ENCODE measurements at regions of chr11 and their contacts with region 1.

Region 1: DNA sequence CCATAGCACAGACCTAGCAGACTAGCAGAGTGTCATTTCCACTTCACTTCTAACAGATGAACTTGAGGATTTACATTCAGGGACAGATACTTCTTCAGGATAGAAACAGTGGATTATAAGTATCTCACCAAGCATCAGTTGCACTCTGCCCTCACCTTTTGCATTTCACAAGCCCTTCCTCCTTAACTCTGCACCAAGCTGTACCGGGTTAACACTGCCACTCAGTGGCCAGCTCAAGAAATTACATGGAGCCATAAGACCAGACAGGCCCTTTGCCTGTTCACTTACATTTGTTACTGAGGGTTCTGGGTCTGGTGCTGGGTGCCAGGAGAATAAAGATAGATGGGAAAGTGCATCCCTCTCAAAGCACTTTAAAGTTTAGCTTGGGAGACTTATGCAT is 309.8 kb downstream of the SHANK2 start:
- DNase-seq: no peak
- ATAC-seq: no peak
- H3K4me3 ChIP-seq: no peak overlapping the region
- H3K27ac ChIP-seq: no peak overlapping the region
- H3K4me1 ChIP-seq: no peaks in the 10 kb centered on the region
- H3K27me3 ChIP-seq: no peaks in the 10 kb centered on the region
- CTCF ChIP-seq: no peak; the same call in 1 of the 2 replicates
- POLR2A ChIP-seq: no peak
- RAD21 ChIP-seq: no peak

Region 2: GRCh38 chr11:70897429-70897828 is 45.2 kb before region 1 on chr11:
- CTCF ChIA-PET with region 1: interaction called, 10 read pairs
- POLR2A ChIA-PET with region 1: no interaction called
- dilution Hi-C with region 1: no loop called
- in situ Hi-C with region 1: no loop called
- intact Hi-C with region 1: no loop called
- DNase-seq: no peak
- ATAC-seq: no peak
- H3K4me3 ChIP-seq: no peak overlapping the region
- H3K27ac ChIP-seq: no peak overlapping the region
- H3K4me1 ChIP-seq: no peaks in the 10 kb centered on the region
- H3K27me3 ChIP-seq: no peaks in the 10 kb centered on the region
- CTCF ChIP-seq: no peak
- POLR2A ChIP-seq: no peak
- RAD21 ChIP-seq: no peak

Measured in IMR-90 (cell line).